Left ventricle myocardium inferior (tissue), 1 donor: ENCODE measurements at regions of chr6 and their contacts with region 1.

Region 1: DNA sequence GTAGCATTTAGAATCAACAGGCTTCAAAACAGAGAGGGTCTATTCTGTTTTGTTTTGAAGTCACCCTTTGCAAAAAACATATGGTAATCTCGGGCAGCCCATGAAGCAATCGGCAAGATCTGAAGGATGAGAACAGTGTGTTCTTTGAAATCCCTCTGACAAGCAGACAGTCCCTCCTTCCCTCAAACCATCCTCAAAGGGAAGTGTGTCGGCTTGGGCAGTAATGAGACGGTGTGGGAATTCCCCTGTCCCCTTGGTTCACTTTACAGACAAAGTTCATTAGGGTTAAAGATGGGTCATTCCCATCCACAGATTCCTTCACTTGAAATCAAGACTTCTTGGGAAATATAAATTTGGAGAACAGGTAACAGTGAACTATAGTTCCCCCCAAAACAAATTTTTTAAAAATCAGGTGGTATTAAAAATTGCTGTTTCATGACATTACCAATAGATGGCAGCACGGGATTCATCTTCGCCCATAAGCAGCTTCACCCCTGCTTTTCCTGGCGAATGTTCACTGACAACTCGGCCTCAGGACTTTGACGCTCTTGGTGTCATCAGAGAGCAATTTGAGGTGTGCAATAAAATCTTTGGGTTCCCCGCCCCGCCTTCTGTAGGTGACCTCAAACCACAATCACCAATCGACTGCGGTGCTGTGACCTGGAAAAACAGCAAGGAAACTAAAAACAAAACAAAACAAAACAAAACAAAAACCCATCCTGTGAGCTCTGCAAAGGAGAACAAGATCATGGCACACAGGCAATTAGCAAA is 159.3 kb upstream of the TNFAIP3 start:
- DNase-seq: peak; percentile 25
- H3K4me3 ChIP-seq: peak overlapping the region; percentile 39
- H3K27ac ChIP-seq: no peak overlapping the region
- H3K4me1 ChIP-seq: peaks cover 28% of the 10 kb centered on the region
- H3K27me3 ChIP-seq: no peaks in the 10 kb centered on the region
- CTCF ChIP-seq: peak; percentile 82

Region 2: DNA sequence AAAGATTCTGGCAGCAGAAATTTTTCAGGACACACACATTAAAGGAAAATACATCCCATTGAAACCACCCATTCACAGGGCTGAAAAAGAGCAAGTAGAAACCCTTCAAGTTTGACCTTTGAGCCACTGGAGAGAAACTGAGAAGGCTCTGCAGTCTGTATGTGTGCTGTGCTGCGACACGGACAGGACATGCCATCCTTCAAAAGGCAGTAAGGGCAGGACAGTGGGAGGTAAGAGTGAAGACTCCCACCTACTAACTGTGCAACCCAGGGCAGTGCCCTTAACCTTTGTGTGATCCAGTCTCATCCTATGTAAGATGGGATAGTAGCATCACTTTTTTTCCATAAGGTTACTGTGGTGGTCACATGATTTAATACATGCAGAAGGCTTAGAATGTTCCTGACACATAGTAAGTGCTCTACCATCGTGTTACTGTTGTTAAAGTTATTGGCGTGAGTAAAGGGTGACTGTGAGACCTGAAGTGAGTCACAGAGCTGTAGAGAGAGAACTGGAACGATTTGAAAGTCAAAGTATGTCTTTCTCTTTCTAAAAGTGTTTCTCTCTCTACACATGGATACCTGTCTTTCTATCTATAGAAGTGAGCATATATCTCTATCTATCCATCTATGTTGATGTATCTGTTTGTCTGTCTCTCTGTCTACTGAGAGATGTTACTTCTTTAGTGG is 59.9 kb before region 1 on chr6:
- intact Hi-C with region 1: no loop called
- DNase-seq: no peak
- H3K4me3 ChIP-seq: no peak overlapping the region
- H3K27ac ChIP-seq: no peak overlapping the region
- H3K4me1 ChIP-seq: peaks cover 31% of the 10 kb centered on the region
- H3K27me3 ChIP-seq: no peaks in the 10 kb centered on the region
- CTCF ChIP-seq: no peak

Region 3: GRCh38 chr6:137866914-137867684 is 159.3 kb after region 1 on chr6 and contains the start of gene TNFAIP3:
- intact Hi-C with region 1: loop called (anchors 5 kb)
- DNase-seq: peak; percentile 93
- H3K4me3 ChIP-seq: peak within 1 kb of the TSS; percentile 100
- H3K27ac ChIP-seq: peak within 1 kb of the TSS; percentile 93
- H3K4me1 ChIP-seq: peaks cover 60% of the 10 kb centered on the region
- H3K27me3 ChIP-seq: no peaks in the 10 kb centered on the region
- CTCF ChIP-seq: peak; percentile 93
- total RNA-seq, gene TNFAIP3: 7.0 TPM

Region 4: DNA sequence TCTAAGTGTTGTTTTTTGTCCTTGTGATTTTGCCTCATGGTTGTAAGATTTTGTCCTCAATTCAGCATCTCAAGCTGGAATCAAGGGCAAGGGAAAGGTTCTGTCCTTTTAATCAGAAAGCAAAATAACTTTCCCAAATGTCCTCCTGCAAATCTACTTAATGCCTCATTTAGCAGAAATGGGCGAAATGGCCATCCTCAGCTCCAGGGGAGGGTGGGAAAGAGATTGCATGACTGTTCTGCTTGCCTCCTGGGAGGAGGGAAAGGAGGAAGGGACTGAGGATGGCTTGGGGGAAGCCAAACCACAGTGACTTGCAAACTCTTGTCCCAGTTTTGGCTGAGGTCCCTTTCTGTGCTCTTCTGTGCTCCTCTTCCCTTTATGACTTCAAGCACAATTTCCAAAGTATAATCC is 202.7 kb after region 1 on chr6:
- intact Hi-C with region 1: no loop called
- DNase-seq: peak; percentile 17
- H3K4me3 ChIP-seq: no peak overlapping the region
- H3K27ac ChIP-seq: peak overlapping the region; percentile 37
- H3K4me1 ChIP-seq: no peaks in the 10 kb centered on the region
- H3K27me3 ChIP-seq: no peaks in the 10 kb centered on the region
- CTCF ChIP-seq: no peak

Region 5: GRCh38 chr6:137944793-137945498 is 237.2 kb after region 1 on chr6:
- intact Hi-C with region 1: loop called (anchors 5 kb)
- DNase-seq: no peak
- H3K4me3 ChIP-seq: no peak overlapping the region
- H3K27ac ChIP-seq: no peak overlapping the region
- H3K4me1 ChIP-seq: no peaks in the 10 kb centered on the region
- H3K27me3 ChIP-seq: no peaks in the 10 kb centered on the region
- CTCF ChIP-seq: peak; percentile 82

Region 6: DNA sequence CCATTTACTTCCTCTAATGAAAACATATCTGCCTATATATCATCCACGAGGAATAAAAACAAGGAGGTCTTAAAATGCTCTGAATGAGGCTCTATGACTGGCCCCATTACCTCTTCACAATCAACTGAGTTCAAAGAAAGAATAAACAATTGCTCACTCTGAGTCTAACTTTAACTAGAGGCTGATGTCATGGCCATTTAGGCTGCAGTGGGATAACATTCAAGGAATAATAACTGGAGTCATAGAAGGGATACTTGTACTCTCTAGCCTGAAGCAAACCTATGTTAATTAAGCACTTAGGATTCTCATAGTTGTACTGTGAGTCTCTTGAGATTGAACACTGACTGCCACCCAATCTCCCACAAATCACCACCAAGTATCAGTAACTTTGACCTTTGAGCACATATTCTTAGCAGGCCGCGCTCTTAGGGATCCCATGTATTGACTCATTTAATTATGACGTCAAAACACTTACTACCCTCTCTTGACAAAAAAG is 329.3 kb after region 1 on chr6:
- intact Hi-C with region 1: no loop called
- DNase-seq: no peak
- H3K4me3 ChIP-seq: no peak overlapping the region
- H3K27ac ChIP-seq: no peak overlapping the region
- H3K4me1 ChIP-seq: peaks cover 1% of the 10 kb centered on the region
- H3K27me3 ChIP-seq: no peaks in the 10 kb centered on the region
- CTCF ChIP-seq: no peak

Region 7: DNA sequence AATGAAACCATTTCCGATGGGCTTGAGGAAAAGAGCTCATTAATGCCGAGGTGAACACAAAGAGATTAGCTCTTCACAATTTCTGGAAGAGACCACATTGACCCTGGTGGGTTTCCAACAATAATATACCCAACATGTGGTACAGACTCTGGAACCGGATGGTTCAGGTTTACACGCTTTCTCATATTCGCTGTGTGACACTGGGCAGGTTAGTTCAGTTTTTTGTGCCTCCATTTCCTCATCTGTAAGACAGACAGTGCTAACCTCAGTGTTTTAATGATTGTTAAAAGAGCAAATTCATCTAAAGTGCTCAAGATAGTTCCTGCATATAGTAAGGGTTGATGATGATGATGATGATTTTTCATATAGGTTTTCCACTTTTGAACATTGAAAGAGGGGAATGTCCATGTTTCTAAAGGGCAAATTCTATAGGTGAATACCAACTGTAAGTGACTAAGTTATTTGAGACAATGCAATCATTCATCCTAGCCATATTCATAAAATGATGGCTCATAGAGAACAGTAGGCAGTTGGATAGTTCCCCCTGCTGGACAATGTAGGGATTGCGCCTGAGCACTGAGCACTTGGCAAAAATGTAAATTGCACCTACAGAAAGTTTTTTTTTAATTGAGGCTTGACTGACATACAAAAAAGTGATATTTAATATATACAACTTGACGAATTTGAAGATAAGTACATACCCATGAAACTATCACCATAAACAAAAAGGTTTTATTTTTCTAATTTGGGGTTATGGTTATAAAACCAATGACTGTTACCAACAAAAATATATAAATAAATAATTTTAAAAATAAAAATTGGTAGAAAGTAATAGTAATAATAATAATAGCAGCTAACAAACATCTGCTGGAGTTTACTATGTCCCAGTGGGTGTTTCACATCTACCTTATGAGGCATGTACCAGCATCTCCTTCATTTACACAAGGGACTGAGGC is 401.5 kb after region 1 on chr6:
- intact Hi-C with region 1: loop called (anchors 5 kb)
- DNase-seq: peak; percentile 51
- H3K4me3 ChIP-seq: no peak overlapping the region
- H3K27ac ChIP-seq: peak overlapping the region; percentile 90
- H3K4me1 ChIP-seq: peaks cover 28% of the 10 kb centered on the region
- H3K27me3 ChIP-seq: peaks cover 35% of the 10 kb centered on the region
- CTCF ChIP-seq: peak; percentile 99